ENCODE measurements at regions of chr13 and their contacts with region 1.

Region 1: DNA sequence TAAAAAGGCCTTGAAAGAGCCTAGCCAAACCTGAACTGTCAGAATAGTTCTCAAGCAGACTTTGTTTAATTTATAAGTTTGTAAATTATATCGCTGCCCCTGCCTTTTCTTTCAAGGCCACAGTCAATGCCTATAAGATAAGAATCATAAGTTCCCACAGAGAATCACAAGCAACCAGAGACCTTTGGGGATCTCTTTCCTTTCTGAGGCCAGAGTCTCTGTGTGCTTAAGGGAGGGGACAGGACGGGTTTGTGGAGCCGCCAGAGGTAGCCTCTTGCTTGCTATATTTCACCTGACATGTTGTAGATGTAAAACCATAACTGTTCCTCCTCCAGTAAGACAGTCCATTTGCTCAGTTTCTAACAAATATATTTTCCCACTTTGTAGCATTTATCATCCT is 458.8 kb downstream of the RFC3 start:
- DNase-seq: no peak

Region 2: GRCh38 chr13:33307843-33308242 is 968.9 kb before region 1 on chr13:
- intact Hi-C with region 1: no loop called
- DNase-seq: no peak

Region 3: GRCh38 chr13:34322014-34322742 is 45.4 kb after region 1 on chr13:
- intact Hi-C with region 1: loop called in 1 of 2 experiments (anchors 1 kb)
- DNase-seq: no peak